ENCODE measurements at regions of chr2 and their contacts with region 1.

Region 1: DNA sequence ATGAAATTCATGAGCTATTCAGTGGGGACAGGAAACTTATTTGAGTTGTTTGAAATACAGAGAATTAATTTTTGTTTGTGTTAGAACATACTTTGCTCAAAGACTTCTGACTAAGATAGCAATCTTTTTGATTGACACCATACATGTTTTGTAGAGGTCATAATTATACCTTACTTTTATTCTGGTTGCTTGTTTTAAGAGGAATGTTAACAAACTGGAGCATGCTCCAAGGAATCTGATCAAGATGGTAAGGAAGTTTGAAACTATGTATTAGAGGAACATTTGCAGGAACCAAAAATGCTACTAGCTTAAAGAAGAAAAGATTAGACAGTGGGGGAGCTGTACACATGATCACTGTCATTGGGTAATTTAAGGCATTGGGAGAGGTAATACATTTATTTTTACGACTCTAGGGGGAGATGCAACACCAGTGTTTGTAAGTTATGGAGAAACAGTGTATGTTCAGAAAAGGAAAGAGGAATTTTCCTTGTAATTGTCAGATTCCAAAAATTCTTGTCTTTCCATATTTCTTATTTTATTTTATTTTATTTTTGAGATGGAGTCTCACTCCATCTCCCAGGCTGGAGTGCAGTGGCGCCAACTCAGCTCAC is 8.0 kb downstream of the AGFG1 start:
- H3K4me3 Mint-ChIP-seq: no peak overlapping the region
- H3K27ac Mint-ChIP-seq: peak overlapping the region; percentile 12
- H3K4me1 Mint-ChIP-seq: peaks cover 49% of the 10 kb centered on the region
- H3K27me3 Mint-ChIP-seq: no peaks in the 10 kb centered on the region

Region 2: GRCh38 chr2:227351639-227352038 is 128.3 kb before region 1 on chr2:
- intact Hi-C with region 1: no loop called
- H3K4me3 Mint-ChIP-seq: no peak overlapping the region
- H3K27ac Mint-ChIP-seq: no peak overlapping the region
- H3K4me1 Mint-ChIP-seq: no peaks in the 10 kb centered on the region
- H3K27me3 Mint-ChIP-seq: no peaks in the 10 kb centered on the region

Region 3: GRCh38 chr2:227423656-227424499 is 56.1 kb before region 1 on chr2:
- intact Hi-C with region 1: no loop called
- H3K4me3 Mint-ChIP-seq: no peak overlapping the region
- H3K27ac Mint-ChIP-seq: no peak overlapping the region
- H3K4me1 Mint-ChIP-seq: peaks cover 18% of the 10 kb centered on the region
- H3K27me3 Mint-ChIP-seq: peaks cover 7% of the 10 kb centered on the region

Region 4: GRCh38 chr2:227436436-227437174 is 43.4 kb before region 1 on chr2:
- intact Hi-C with region 1: no loop called
- H3K4me3 Mint-ChIP-seq: no peak overlapping the region
- H3K27ac Mint-ChIP-seq: peak overlapping the region; percentile 31
- H3K4me1 Mint-ChIP-seq: peaks cover 21% of the 10 kb centered on the region
- H3K27me3 Mint-ChIP-seq: no peaks in the 10 kb centered on the region

Region 5: DNA sequence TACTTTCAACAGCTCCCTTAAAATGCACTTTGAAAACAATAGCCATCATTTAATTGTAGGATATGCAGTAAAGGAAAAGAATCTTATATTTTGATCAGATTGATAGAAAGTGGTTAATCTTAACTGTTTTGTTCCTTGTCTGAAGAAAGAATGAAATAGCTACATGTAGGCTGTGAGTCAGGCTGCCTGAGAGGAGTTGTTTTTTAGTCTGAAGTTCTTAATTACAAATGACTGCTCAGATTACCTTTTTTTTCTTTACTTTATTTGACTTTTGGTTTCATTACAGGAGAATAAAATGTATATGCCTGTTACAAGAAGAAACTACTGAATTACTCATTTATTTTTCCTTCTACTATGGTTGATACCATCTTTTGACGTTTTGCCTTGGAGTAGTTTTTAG is 48.8 kb after region 1 on chr2:
- intact Hi-C with region 1: loop called (anchors 5 kb)
- H3K4me3 Mint-ChIP-seq: no peak overlapping the region
- H3K27ac Mint-ChIP-seq: no peak overlapping the region
- H3K4me1 Mint-ChIP-seq: no peaks in the 10 kb centered on the region
- H3K27me3 Mint-ChIP-seq: no peaks in the 10 kb centered on the region

Region 6: DNA sequence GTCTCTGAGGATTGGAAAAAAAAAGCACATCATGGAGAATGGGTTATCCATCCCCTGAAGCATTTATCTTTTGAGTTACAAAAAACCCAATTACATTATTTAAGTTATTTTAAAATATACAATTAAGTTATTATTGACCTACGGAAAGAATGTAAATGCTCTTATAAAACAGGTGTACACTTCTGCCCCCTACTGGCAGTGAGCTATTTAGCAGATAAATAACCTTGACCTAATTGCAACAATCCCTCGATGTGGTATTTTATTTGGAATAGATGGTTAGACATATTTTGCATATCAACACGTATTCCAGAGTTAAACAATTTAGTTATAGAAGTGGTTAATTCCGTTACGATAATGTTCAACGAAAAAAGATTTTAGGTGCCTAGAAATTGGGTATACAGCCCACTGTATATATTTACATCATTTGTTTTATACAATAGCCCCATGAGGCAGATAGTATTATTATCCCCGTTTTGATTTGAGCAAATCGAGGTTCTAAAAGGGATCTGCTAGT is 382.3 kb after region 1 on chr2:
- intact Hi-C with region 1: no loop called
- H3K4me3 Mint-ChIP-seq: no peak overlapping the region
- H3K27ac Mint-ChIP-seq: no peak overlapping the region
- H3K4me1 Mint-ChIP-seq: no peaks in the 10 kb centered on the region
- H3K27me3 Mint-ChIP-seq: peaks cover 11% of the 10 kb centered on the region

Measured in dendritic cell treated with granulocyte-macrophage colony-stimulating factor and Interleukin-4, amounts not matched to agents 40 ng/mL and 50 ng/mL, for 4 days (primary cell).